Aorta (tissue), 5 donors: ENCODE measurements at regions of chr11 and their contacts with region 1.

Region 1: DNA sequence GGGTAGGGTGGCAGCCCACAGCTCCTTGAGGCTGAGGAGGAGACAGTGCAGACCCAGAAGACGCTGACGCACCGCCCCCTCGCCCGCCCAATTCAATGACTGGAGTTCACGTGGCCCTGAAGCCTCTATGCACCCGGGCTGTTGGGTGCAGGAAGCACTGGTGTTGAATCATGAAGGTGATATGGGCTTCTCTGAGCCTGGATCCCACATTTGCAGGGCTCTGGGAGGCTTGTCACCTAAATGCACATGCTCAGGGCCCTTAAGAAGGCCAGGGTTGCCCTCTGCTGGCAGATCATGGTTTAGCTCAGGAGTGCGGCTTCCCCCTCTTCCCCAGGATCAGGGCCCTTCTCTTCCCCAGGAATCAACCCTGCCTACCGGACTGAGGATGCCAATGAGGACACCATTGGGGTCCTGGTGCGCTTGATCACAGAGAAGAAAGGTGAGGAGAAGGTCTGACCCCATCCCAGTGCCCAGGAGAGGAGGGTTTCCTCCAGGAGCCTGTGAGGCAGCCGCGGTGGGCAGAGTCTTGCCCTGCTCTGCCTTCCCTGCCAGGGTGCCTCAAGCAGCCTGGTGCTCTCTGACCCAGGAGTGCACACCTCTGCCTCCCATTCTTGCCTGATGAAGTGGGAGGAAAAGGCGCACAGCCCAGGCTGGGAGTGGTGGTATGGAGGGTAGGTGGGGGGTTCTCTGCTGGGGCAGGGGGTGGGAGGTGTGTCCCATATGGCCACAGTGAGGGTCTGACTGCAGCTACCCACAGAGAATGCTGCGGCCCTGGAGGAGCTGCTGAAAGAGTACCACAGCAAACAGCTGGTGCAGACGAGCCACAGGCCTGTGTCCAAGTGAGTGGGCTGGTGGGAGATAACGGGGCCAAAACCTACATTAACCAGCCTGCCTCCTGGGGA is 17.5 kb downstream of the RELT start:
- DNase-seq: peak; percentile 80 to 89
- ATAC-seq: peak; percentile 68
- H3K4me3 ChIP-seq: no peak overlapping the region
- H3K27ac ChIP-seq: no peak overlapping the region
- H3K4me1 ChIP-seq: no peaks in the 10 kb centered on the region
- H3K27me3 ChIP-seq: no peaks in the 10 kb centered on the region

Region 2: DNA sequence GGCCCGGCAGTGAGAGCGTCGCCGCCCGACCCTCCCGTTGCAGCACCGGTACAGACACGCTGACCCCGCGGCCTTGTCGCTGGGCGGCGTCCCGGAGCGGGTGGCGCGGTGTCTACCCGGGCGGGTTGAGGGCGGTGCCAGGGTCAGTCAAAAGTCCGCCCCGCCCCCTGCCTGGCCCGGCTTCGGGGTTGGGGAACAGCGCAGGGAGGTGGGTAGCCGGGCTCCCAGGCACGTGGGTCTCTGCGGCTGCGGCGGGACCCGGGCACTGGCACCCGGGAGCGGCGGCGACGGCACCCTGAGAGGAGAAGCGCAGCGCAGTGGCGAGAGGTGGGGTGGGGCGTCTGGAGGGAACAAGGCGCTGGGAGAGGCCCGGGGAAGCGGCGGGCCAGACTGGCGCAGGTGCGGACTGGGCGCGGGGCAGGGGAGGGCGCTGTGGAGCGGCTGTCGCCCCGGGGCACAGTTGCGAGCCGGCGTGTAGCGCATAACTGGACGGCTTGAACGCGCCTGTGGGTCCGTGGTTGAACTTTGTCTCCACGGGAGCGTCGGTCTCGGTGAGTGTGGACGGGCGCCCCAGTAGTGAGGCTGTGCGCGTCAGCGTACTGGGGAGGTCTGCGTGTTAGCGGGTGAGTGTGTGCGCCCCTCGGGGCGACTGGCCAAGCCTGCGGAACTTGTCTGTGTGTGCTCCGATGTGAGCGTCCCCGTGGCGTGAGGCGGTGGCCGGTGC is 175.5 kb before region 1 on chr11 and contains the start of gene P2RY2:
- intact Hi-C with region 1: loop called in 1 of 2 experiments (anchors 10 kb)
- DNase-seq: peak; percentile 86 to 92
- ATAC-seq: peak; percentile 79
- H3K4me3 ChIP-seq: peak within 1 kb of the TSS; percentile 23 to 37
- H3K27ac ChIP-seq: no peak within 1 kb of the TSS
- H3K4me1 ChIP-seq: no peaks in the 10 kb centered on the region
- H3K27me3 ChIP-seq: no peaks in the 10 kb centered on the region
- total RNA-seq, gene P2RY2: 2.9 to 3.9 TPM

Region 3: DNA sequence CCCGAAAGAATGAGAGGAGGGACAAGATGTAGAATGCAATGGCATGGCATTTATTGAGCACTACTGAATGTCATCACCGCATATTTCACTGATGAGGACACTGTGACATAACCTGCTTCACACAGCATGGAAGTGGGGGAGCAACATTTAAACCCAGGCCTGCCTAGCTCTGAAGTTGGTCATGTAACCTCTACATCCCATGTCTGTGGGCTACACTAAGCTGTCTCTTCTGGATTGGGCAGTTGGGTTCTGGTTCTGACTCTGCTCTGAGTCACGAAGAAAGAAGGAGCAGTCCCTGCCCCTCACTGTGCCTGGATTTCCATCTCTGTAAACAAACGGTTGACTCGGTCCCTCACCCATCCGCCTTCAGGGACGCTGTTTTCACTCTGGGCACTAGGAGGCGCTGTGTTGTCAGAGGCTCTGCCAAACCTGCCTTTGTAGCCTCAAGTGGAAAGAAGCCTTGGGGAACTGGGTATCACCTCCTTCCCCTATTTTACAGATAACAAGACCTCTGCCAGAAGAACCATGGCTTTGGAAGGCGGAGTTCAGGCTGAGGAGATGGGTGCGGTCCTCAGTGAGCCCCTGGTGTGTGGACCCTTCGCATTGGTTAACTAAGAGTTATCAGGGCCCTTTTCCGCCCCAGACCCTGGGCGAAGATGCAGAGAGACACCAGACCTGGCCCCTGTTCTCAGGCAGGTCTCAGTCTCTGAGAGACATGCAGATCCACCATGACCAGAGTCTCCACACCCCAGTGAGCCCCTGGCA is 98.3 kb before region 1 on chr11:
- intact Hi-C with region 1: loop called in 1 of 2 experiments (anchors 5 kb)
- DNase-seq: peak; percentile 80 to 92
- ATAC-seq: peak; percentile 51
- H3K4me3 ChIP-seq: no peak overlapping the region
- H3K27ac ChIP-seq: no peak overlapping the region
- H3K4me1 ChIP-seq: no peaks in the 10 kb centered on the region
- H3K27me3 ChIP-seq: no peaks in the 10 kb centered on the region

Region 4: GRCh38 chr11:73307323-73308002 is 86.3 kb before region 1 on chr11:
- intact Hi-C with region 1: loop called in 1 of 2 experiments (anchors 5 kb)
- DNase-seq: peak; percentile 98 to 100
- ATAC-seq: peak; percentile 83
- H3K4me3 ChIP-seq: peak overlapping the region; percentile 46 to 91
- H3K27ac ChIP-seq: peak overlapping the region in 1 of 2 donors; percentile 72
- H3K4me1 ChIP-seq: no peaks in the 10 kb centered on the region
- H3K27me3 ChIP-seq: no peaks in the 10 kb centered on the region

Region 5: DNA sequence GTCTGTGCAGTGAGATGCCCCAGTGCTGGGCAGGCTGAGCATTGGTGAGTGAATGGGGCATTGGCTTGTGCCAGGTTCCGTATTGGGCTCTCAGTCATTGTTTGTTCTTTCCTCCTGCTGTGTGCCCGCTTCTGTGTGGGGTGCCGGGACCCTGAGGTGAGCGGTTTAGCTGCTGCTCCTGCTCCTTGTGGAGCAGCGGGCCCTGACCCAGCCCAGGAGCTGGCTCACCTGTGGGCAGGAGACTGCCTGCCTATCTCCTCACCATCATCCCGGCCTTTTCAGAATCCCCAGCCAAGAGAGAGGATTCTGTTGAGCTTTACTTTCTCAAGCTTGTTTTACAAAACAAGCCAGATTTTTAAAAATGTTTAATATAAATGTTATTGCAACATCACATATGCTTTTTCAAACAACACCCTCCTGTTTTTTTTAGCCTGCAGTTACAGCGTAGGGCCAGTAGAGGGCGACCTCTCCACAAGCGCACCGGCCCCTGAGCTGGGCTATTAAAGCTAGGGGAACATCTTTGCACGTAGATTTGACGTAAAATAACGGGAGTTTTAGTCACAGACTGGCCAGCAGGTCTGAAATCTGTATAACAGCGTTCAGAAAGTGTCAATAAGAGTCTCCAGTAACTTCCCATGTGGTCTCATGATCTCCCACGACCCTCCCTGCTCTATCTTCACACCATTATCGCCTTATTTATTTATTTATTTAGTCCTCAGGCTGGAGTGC is 42.7 kb before region 1 on chr11:
- intact Hi-C with region 1: loop called (anchors 5 kb)
- DNase-seq: no peak
- ATAC-seq: peak; percentile 81
- H3K4me3 ChIP-seq: no peak overlapping the region
- H3K27ac ChIP-seq: no peak overlapping the region
- H3K4me1 ChIP-seq: no peaks in the 10 kb centered on the region
- H3K27me3 ChIP-seq: no peaks in the 10 kb centered on the region